GM13977 (cell line): ENCODE measurements at regions of chr1 and their contacts with region 1.

Region 1: DNA sequence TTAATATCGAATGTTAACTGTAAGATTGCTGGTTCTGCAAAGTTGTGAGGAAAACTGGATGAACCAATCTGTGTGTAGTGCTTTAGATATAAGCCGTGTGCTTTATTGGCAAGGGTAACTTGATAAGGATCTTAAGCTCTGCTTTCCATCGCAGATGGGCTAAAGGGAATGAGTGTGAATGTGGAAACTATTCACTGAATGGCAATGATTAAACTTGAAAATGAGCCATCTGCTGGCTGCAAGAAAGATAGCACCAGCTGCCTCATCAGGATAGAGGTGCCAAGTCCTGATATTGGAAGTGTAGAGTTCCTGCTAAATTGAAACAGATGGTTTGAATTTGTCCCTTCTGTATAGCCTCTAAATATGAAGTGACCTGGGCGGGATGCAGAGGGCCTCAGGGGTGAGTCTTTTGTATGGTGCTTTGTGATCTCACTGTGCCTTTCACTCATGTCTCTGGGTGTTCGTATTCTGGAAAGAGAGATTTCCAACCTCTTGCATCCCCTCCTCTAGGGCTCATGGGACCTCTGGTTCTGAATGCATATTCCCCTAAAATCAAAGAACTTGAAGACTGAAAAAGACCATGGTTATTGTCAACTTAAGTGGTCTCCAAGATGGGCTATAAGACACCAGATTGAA is 9.2 kb downstream of the FCRL3 start:
- DNase-seq: peak; percentile 39
- CTCF ChIP-seq: peak; percentile 82

Region 2: GRCh38 chr1:157580179-157580827 is 111.1 kb before region 1 on chr1:
- in situ Hi-C with region 1: loop called (anchors 25 kb)
- DNase-seq: peak; percentile 43
- CTCF ChIP-seq: peak; percentile 73